Naive thymus-derived CD4-positive, alpha-beta T cell (primary cell): ENCODE measurements at regions of chr22 and their contacts with region 1.

Region 1: GRCh38 chr22:40856513-40857308 is at the starts of genes ST13 and XPNPEP3:
- DNase-seq: peak; percentile 96 to 98 (median 97)
- ATAC-seq: peak; percentile 94
- H3K4me3 ChIP-seq: peak within 1 kb of the TSS; percentile 83
- H3K4me3 Mint-ChIP-seq: peak within 1 kb of the TSS; percentile 94 to 100 (median 98)
- H3K27ac ChIP-seq: peak within 1 kb of the TSS; percentile 97
- H3K27ac Mint-ChIP-seq: peak within 1 kb of the TSS; percentile 98 to 100 (median 100)
- H3K4me1 ChIP-seq: peaks cover 24 to 39% of the 10 kb centered on the region in 2 donors
- H3K4me1 Mint-ChIP-seq: peaks cover 25 to 72% (median 64%) of the 10 kb centered on the region in 7 donors
- H3K27me3 ChIP-seq: no peaks in the 10 kb centered on the region
- H3K27me3 Mint-ChIP-seq: peaks cover 0 to 2% (median 0%) of the 10 kb centered on the region in 5 donors
- total RNA-seq, gene ST13: 126 to 247 (median 185) TPM
- total RNA-seq, gene XPNPEP3: 14.4 to 21.8 (median 19.0) TPM

Region 2: GRCh38 chr22:40636380-40637182 is 220.1 kb before region 1 on chr22 and contains the start of gene MRTFA:
- CTCF ChIA-PET with region 1: no interaction called
- POLR2A ChIA-PET with region 1: interaction called, 3 read pairs
- intact Hi-C with region 1: loop called (anchors 1 kb)
- DNase-seq: peak; percentile 90 to 99 (median 98)
- ATAC-seq: peak; percentile 96
- H3K4me3 ChIP-seq: peak within 1 kb of the TSS; percentile 84
- H3K4me3 Mint-ChIP-seq: peak within 1 kb of the TSS; percentile 94 to 100 (median 97)
- H3K27ac ChIP-seq: peak within 1 kb of the TSS; percentile 85
- H3K27ac Mint-ChIP-seq: peak within 1 kb of the TSS; percentile 96 to 99 (median 97)
- H3K4me1 ChIP-seq: peaks cover 14 to 27% of the 10 kb centered on the region in 2 donors
- H3K4me1 Mint-ChIP-seq: peaks cover 27 to 56% (median 44%) of the 10 kb centered on the region in 7 donors
- H3K27me3 ChIP-seq: no peaks in the 10 kb centered on the region
- H3K27me3 Mint-ChIP-seq: no peaks in the 10 kb centered on the region
- total RNA-seq, gene MRTFA: 64.0 to 114 (median 104) TPM

Region 3: DNA sequence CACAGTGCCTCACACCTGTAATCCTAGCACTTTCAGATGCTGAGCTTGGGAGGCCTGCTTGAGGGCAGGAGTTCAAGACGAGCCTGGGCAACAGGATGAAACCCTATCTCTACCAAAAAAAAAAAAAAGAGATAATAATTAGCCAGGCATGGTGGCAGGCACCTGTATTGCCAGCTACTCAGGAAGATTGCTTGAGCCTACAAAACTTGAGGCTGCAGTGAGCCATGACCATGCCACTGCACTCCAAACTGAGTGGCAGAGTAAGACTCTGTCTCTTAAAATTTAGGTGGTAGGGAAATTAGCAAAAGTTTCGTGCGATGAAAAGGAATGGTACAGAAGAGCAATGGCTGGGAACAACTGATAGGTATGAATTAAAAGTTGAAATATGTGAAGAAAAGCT is 18.2 kb before region 1 on chr22:
- CTCF ChIA-PET with region 1: no interaction called
- POLR2A ChIA-PET with region 1: interaction called, 5 read pairs
- intact Hi-C with region 1: loop called in 1 of 2 experiments (anchors 2 kb)
- DNase-seq: no peak
- ATAC-seq: no peak
- H3K4me3 ChIP-seq: no peak overlapping the region
- H3K4me3 Mint-ChIP-seq: no peak overlapping the region
- H3K27ac ChIP-seq: no peak overlapping the region
- H3K27ac Mint-ChIP-seq: peak overlapping the region in 4 of 9 donors; percentile 26 to 57 (median 50)
- H3K4me1 ChIP-seq: no peaks in the 10 kb centered on the region
- H3K4me1 Mint-ChIP-seq: peaks cover 1 to 37% (median 29%) of the 10 kb centered on the region in 7 donors
- H3K27me3 ChIP-seq: no peaks in the 10 kb centered on the region
- H3K27me3 Mint-ChIP-seq: no peaks in the 10 kb centered on the region

Region 4: DNA sequence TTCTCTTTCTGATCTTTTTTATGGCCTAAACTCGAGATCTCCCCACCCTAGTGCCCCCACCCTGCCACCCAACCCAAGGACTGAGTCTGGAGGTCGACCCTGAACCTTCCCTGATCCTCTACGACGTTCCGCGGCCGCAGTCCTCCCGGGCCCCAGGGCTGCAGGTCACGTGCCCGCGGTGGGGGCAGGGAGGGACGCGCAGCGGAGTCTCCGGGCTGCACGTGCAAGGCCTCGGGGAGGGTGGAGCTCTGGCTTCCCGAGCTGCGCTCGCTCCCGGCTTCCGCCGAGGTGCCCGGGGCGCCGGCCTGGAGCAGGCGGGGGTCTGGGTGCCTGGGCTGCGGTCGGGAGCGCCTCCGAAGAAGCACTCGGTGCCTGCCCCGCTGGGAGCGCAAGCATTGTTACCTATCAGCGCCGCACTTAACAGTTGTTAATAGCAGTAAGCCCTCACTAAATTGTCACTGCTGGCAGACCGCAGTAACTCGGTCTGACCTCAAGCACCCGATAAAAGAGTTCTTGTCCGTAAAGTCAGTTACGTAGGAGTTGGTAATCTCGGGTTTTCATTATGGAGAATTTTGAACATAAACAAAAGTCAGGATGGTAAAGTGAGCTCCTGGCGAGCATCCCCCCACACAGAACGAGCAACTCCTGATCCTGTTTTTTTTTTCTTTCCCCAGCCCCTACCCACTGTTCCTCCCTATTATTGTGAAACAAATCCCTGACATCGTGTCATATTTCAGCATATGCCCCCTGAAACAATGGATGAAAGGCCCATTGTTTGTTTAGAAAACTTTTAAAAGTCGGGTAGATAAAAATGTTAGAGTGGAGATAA is 166.0 kb after region 1 on chr22:
- CTCF ChIA-PET with region 1: no interaction called
- POLR2A ChIA-PET with region 1: interaction called, 3 read pairs
- intact Hi-C with region 1: loop called in 1 of 2 experiments (anchors 2 kb)
- DNase-seq: peak; percentile 69 to 83 (median 74)
- ATAC-seq: peak; percentile 89
- H3K4me3 ChIP-seq: peak overlapping the region; percentile 57
- H3K4me3 Mint-ChIP-seq: peak overlapping the region; percentile 75 to 91 (median 84)
- H3K27ac ChIP-seq: peak overlapping the region; percentile 82
- H3K27ac Mint-ChIP-seq: peak overlapping the region; percentile 74 to 91 (median 88)
- H3K4me1 ChIP-seq: peaks cover 12 to 13% of the 10 kb centered on the region in 2 donors
- H3K4me1 Mint-ChIP-seq: peaks cover 12 to 23% (median 21%) of the 10 kb centered on the region in 7 donors
- H3K27me3 ChIP-seq: no peaks in the 10 kb centered on the region
- H3K27me3 Mint-ChIP-seq: peaks cover 0 to 14% (median 0%) of the 10 kb centered on the region in 5 donors

Region 5: DNA sequence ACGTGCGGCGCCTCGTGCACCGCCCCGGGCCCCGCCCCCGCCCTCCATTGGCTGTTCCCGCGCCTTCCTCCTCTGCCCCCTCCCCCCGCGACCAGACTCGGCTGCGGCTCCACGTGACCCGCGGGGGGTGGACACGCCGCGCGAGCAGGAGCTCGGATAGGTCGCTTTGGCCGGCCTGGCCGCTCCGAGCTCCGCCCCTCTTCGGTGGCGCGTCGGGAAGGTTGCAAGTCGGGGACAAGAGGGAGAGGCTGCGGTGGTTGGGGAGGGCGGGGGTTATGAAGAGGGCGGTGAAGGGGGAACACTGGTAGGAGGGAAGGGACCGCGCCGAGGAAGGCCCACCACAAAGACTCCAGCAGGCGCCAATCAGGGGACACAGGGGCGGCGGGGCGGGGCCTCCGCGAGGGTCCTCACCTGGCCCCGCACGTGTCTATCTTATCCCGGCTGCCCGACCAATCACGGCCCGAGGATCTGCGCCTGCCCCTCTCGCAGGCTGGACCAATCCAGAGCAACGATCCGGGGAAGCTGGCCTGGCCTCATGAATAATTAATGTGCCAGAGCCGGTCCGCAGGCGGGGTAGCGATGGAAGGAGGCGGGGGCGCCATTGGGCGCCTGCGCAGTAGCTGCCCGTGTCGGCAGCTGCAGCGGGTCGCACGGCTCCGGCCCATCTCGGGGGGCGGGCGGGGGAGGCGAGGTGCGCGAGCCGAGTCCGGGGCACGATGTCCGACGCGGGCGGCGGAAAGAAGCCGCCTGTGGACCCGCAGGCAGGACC is 524.8 kb after region 1 on chr22 and contains the start of gene TEF:
- CTCF ChIA-PET with region 1: no interaction called
- POLR2A ChIA-PET with region 1: interaction called, 3 read pairs
- intact Hi-C with region 1: loop called (anchors 1 kb)
- DNase-seq: peak; percentile 97 to 99 (median 98)
- ATAC-seq: peak; percentile 89
- H3K4me3 ChIP-seq: peak within 1 kb of the TSS; percentile 86
- H3K4me3 Mint-ChIP-seq: peak within 1 kb of the TSS; percentile 90 to 97 (median 94)
- H3K27ac ChIP-seq: peak within 1 kb of the TSS; percentile 95
- H3K27ac Mint-ChIP-seq: peak within 1 kb of the TSS; percentile 94 to 99 (median 98)
- H3K4me1 ChIP-seq: peaks cover 5 to 14% of the 10 kb centered on the region in 2 donors
- H3K4me1 Mint-ChIP-seq: peaks cover 5 to 29% (median 19%) of the 10 kb centered on the region in 7 donors
- H3K27me3 ChIP-seq: no peaks in the 10 kb centered on the region
- H3K27me3 Mint-ChIP-seq: peaks cover 0 to 5% (median 0%) of the 10 kb centered on the region in 5 donors
- total RNA-seq, gene TEF: 3.8 to 8.4 (median 6.2) TPM

Region 6: GRCh38 chr22:41621099-41621910 is 764.6 kb after region 1 on chr22 and contains the start of gene XRCC6:
- CTCF ChIA-PET with region 1: no interaction called
- POLR2A ChIA-PET with region 1: no interaction called
- intact Hi-C with region 1: loop called in 1 of 2 experiments (anchors 1 kb)
- DNase-seq: peak; percentile 97 to 100 (median 99)
- ATAC-seq: peak; percentile 97
- H3K4me3 ChIP-seq: peak within 1 kb of the TSS; percentile 99
- H3K4me3 Mint-ChIP-seq: peak within 1 kb of the TSS; percentile 93 to 99 (median 97)
- H3K27ac ChIP-seq: peak within 1 kb of the TSS; percentile 99
- H3K27ac Mint-ChIP-seq: peak within 1 kb of the TSS; percentile 95 to 100 (median 99)
- H3K4me1 ChIP-seq: peaks cover 18 to 20% of the 10 kb centered on the region in 2 donors
- H3K4me1 Mint-ChIP-seq: peaks cover 22 to 63% (median 44%) of the 10 kb centered on the region in 7 donors
- H3K27me3 ChIP-seq: no peaks in the 10 kb centered on the region
- H3K27me3 Mint-ChIP-seq: peaks cover 0 to 3% (median 0%) of the 10 kb centered on the region in 5 donors
- total RNA-seq, gene XRCC6: 139 to 270 (median 160) TPM